Activated B cell treated with CpG ODN at 0.5 μM for 24 hours (primary cell): ENCODE measurements at regions of chr5 and their contacts with region 1.

Region 1: GRCh38 chr5:68331192-68332079 is 115.9 kb downstream of the PIK3R1 start:
- DNase-seq: no peak
- ATAC-seq: peak; percentile 50
- H3K4me3 Mint-ChIP-seq: peak overlapping the region; percentile 1
- H3K27ac Mint-ChIP-seq: peak overlapping the region; percentile 4
- H3K4me1 Mint-ChIP-seq: peaks cover 24% of the 10 kb centered on the region
- H3K27me3 Mint-ChIP-seq: no peaks in the 10 kb centered on the region
- CTCF ChIP-seq: no peak

Region 2: GRCh38 chr5:68315679-68316271 is 15.7 kb before region 1 on chr5:
- CTCF ChIA-PET with region 1: no interaction called
- POLR2A ChIA-PET with region 1: no interaction called
- intact Hi-C with region 1: loop called (anchors 1 kb)
- DNase-seq: peak; percentile 26
- ATAC-seq: peak; percentile 99
- H3K4me3 Mint-ChIP-seq: no peak overlapping the region
- H3K27ac Mint-ChIP-seq: peak overlapping the region; percentile 54
- H3K4me1 Mint-ChIP-seq: peaks cover 10% of the 10 kb centered on the region
- H3K27me3 Mint-ChIP-seq: no peaks in the 10 kb centered on the region
- CTCF ChIP-seq: no peak

Region 3: DNA sequence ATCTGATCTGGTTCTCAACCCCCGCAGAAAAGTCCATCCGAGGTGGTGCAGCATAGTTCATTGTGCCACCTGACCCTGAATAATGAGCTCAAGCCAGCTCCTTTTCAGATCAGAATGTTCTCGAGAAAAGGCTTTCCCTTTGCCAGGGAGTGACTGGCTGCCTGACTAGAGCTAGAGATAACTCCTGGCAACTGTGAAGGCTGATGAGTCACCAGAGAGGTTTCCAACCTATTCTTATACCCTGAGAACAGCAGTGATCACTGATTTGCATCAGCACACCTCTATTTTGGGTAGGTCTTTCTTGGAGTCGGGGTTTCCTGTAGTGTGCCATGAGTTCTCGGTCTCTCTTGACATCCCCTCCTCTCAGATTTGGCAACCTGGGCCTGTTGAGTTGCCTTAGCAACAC is 12.0 kb after region 1 on chr5:
- CTCF ChIA-PET with region 1: no interaction called
- POLR2A ChIA-PET with region 1: no interaction called
- intact Hi-C with region 1: no loop called
- DNase-seq: no peak
- ATAC-seq: no peak
- H3K4me3 Mint-ChIP-seq: no peak overlapping the region
- H3K27ac Mint-ChIP-seq: no peak overlapping the region
- H3K4me1 Mint-ChIP-seq: peaks cover 9% of the 10 kb centered on the region
- H3K27me3 Mint-ChIP-seq: peaks cover 1% of the 10 kb centered on the region
- CTCF ChIP-seq: no peak